ENCODE measurements at regions of chr11 and their contacts with region 1.

Region 1: GRCh38 chr11:10808553-10809372 is at the start of gene EIF4G2:
- DNase-seq: peak; percentile 99
- H3K4me3 ChIP-seq: peak within 1 kb of the TSS; percentile 81 to 98 (median 91)
- H3K27ac ChIP-seq: peak within 1 kb of the TSS; percentile 99 to 100 (median 100)
- H3K4me1 ChIP-seq: peaks cover 32 to 55% (median 46%) of the 10 kb centered on the region in 6 donors
- H3K27me3 ChIP-seq: no peaks in the 10 kb centered on the region
- CTCF ChIP-seq: peak in 3 of 11 experiments; percentile 12 to 24 (median 18)
- POLR2A ChIP-seq: peak; percentile 96 to 98 (median 97)
- total RNA-seq, gene EIF4G2: 444 to 712 (median 622) TPM

Region 2: DNA sequence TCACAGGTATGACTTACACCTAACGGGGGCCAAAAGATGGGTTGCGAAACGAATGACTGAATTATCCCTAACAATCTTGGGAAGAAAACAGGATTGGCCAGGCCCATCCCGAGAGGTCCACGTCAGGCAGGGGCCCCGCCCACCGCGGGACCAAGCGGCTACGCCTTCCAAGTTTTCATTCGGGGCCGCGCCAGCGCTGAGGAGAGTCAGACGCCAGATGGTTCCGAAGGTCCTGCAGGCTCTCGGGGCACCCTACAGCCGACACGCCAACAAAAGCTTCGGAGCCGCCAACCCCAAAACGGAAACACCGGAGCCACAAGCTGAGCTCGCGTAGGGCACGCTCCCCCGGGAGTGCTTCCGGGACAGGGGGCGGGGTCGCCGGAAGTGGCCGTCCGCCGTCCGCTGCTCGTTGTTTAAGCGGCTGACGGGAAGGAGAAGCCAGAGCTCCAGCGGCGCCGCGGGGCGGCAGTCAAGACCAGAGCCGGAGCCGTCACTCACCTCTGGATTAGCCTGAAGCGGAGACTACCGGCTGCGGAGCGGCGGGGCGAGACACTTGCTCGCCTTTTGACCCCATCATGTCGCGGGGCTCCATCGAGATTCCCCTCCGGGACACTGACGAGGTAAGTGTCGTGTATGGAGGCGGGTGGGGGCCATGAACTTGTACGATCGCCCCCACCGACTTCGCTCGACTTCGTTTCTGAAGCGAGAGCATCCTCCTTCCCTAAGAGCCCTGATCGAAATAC is 57.8 kb before region 1 on chr11 and contains the start of gene CTR9:
- intact Hi-C with region 1: loop called (anchors 10 kb)
- DNase-seq: peak; percentile 99
- H3K4me3 ChIP-seq: peak within 1 kb of the TSS; percentile 64 to 96 (median 82)
- H3K27ac ChIP-seq: peak within 1 kb of the TSS; percentile 83 to 97 (median 94)
- H3K4me1 ChIP-seq: peaks cover 9 to 39% (median 26%) of the 10 kb centered on the region in 6 donors
- H3K27me3 ChIP-seq: no peaks in the 10 kb centered on the region
- CTCF ChIP-seq: peak in 6 of 11 experiments; percentile 10 to 42 (median 30)
- POLR2A ChIP-seq: peak; percentile 80 to 92 (median 83)
- total RNA-seq, gene CTR9: 31.1 to 44.4 (median 36.0) TPM

Region 3: DNA sequence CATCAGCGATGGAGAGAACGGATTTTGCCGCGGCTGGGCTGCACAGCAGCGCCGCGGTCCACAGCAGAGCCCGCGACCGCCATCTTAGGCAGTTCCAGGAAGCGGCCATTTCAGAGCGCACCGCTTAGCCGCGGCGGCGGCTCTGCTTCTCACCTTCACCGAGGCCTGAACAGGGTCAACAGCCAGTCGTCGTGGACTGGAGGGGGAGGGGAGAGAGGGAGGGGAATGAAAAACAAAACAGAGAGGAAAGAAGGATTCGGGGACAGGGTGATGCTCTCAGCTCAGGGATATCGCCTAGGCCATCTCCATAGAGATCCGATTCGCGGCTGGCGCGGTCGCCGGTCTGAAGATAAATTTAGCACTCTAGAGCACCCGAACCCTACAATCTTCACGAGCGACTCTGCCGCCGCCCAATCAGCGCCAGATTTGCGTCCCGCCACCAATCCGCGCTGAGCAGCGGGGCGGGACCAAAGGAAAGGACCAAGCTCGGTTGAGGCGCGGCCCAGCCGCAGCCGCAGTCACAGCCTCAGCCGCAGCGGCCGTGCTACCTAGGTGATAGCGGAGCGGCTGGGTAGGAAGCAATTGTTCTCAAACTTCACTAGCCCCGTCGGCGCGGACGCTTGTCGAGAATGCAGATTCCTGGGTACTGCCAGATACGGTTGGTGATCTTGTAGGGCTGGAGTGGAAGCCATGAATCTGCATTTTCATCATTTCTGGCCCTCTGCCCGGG is 49.1 kb after region 1 on chr11 and contains the start of gene ZBED5:
- intact Hi-C with region 1: loop called (anchors 5 kb)
- DNase-seq: peak; percentile 99
- H3K4me3 ChIP-seq: peak within 1 kb of the TSS; percentile 61 to 95 (median 84)
- H3K27ac ChIP-seq: peak within 1 kb of the TSS; percentile 90 to 99 (median 98)
- H3K4me1 ChIP-seq: peaks cover 22 to 79% (median 42%) of the 10 kb centered on the region in 6 donors
- H3K27me3 ChIP-seq: no peaks in the 10 kb centered on the region
- CTCF ChIP-seq: peak in 6 of 11 experiments; percentile 4 to 46 (median 21)
- POLR2A ChIP-seq: peak; percentile 69 to 98 (median 91)
- total RNA-seq, gene ZBED5: 54.8 to 83.8 (median 66.9) TPM

Measured in spleen (tissue), 13 donors.